PC-3 (cell line): ENCODE measurements at regions of chr12 and their contacts with region 1.

Region 1: DNA sequence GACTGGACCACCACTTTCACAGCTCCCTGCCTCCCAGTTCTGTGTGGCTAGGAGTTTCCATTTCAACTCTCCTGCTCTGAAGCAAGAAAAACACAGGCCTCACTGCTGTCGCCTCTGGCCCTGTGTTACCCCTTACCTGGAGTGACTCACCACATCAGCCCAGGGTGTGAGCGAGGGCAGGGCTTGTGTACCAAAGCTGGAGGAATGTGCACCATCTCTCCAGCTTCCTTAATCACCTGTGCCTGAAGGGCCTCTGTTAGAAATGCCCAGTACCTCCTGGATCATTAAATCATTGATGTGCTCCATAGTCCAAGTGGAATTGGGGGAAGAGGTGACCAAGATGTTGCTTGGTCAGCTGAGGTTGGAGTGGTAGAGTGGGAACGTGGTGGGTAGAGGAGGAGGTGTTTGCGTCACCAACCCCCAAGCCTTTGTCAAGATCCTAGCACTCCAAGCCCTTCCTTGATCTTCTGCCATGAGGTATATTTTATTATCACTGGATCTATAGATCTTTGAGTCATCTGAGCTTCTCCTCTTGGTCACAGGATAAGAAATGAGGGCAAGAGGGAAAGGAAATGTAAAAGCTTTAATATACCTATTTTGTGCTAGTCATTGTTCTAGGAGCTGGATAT is 51.2 kb downstream of the SSPN start:
- DNase-seq: peak; percentile 99
- ATAC-seq: peak; percentile 94
- H3K4me3 ChIP-seq: peak overlapping the region; percentile 23; the same call in 1 of the 2 replicates
- H3K27ac ChIP-seq: peak overlapping the region; percentile 94
- H3K4me1 ChIP-seq: peaks cover 56% of the 10 kb centered on the region
- H3K27me3 ChIP-seq: no peaks in the 10 kb centered on the region
- CTCF ChIP-seq: no peak

Region 2: DNA sequence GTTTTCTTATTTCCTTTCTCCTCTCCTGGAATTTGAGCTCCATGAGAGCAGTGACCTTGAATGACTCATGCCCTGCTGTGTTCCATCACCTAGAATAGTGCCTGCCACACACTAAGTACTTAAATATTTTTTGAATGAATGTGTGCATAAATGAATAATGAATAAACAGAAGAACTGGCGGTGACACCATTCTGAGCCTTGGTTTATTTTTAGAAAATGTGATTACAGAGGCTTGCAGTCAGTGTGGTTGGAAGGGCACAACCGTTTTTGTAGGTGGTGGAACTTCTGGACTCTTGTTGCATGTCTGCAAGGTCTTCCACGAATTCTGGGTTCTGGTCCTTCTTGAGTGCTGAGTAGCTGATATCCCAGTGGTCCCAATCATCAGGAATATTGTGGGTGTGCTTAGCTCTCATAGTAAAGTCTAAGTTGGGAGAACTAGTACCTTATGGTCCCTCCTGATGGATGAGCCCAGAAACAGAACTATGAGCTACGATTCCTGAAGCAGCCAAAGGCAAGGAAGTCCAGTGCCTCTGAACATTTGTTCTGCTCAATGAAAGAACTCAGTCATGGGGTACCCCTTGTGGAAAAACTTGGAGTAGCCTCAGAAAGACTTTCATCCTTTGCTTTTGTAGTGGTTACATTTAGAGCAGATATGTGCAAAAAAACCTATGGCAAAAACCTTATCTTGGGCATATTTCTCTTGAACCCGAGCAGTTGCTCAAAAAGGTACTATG is 93.0 kb before region 1 on chr12:
- CTCF ChIA-PET with region 1: no interaction called
- POLR2A ChIA-PET with region 1: interaction called, 4 read pairs
- intact Hi-C with region 1: loop called (anchors 2 kb)
- DNase-seq: peak; percentile 99
- ATAC-seq: peak; percentile 95
- H3K4me3 ChIP-seq: peak overlapping the region; percentile 22
- H3K27ac ChIP-seq: peak overlapping the region; percentile 88
- H3K4me1 ChIP-seq: peaks cover 37% of the 10 kb centered on the region
- H3K27me3 ChIP-seq: no peaks in the 10 kb centered on the region
- CTCF ChIP-seq: peak; percentile 46

Region 3: GRCh38 chr12:26195641-26196420 is 50.8 kb before region 1 on chr12:
- CTCF ChIA-PET with region 1: no interaction called
- POLR2A ChIA-PET with region 1: no interaction called
- intact Hi-C with region 1: loop called (anchors 5 kb)
- DNase-seq: peak; percentile 74
- ATAC-seq: peak; percentile 86
- H3K4me3 ChIP-seq: peak overlapping the region; percentile 69
- H3K27ac ChIP-seq: peak overlapping the region; percentile 50
- H3K4me1 ChIP-seq: peaks cover 36% of the 10 kb centered on the region
- H3K27me3 ChIP-seq: no peaks in the 10 kb centered on the region
- CTCF ChIP-seq: 0 out of 2 replicates have a peak, but pooled peaks have one; percentile 12